ENCODE measurements at regions of chr2 and their contacts with region 1.

Region 1: DNA sequence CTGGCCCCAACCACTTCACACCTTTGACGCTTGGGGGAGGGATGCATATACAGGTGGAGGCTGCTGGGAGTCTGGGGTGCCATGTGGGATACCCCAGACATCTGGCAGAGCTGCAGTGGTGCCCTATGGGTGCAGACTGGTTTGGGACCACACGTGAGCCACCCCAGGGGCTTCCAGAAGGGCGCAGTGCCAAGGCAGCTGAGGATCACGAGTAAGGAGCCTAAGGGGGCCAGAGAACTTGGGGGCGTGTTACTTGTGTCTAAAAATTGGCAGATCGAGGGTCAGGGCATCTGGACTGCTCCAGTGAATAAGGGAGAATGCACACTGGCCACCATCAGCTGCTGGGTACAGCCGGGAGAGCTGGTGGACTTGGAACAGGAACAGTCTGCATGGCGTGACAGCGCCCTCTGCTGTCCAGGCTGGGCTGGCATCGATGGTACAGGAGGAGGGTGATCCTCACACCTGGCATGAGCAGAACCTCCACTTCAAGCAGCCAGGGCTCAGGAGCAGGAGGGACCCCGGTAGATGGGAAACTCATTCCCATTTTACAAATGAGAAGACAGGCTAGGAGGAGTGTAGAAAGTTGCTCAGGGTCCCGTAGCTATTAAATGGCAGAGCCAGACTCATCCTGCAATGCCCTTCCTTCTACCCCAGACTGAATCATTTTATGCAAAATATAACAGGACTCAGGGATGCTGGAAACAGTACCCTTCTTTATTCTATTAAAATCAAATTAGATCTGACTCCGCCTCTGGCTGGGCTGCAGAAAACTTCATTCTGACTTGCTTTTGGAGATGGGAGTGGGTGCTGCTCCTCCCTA is 60.4 kb downstream of the ATOH8 start:
- DNase-seq: peak; percentile 42 to 85 (median 71)
- ATAC-seq: peak; percentile 93
- H3K4me3 ChIP-seq: no peak overlapping the region
- H3K4me3 Mint-ChIP-seq: no peak overlapping the region
- H3K27ac ChIP-seq: no peak overlapping the region
- H3K27ac Mint-ChIP-seq: no peak overlapping the region
- H3K4me1 ChIP-seq: no peaks in the 10 kb centered on the region
- H3K4me1 Mint-ChIP-seq: peaks cover 0 to 3% (median 0%) of the 10 kb centered on the region in 7 donors
- H3K27me3 ChIP-seq: no peaks in the 10 kb centered on the region
- H3K27me3 Mint-ChIP-seq: peaks cover 0 to 29% (median 7%) of the 10 kb centered on the region in 5 donors

Region 2: GRCh38 chr2:85266146-85267041 is 547.8 kb before region 1 on chr2:
- CTCF ChIA-PET with region 1: no interaction called
- POLR2A ChIA-PET with region 1: no interaction called
- intact Hi-C with region 1: no loop called
- DNase-seq: peak; percentile 27 to 76 (median 48)
- ATAC-seq: peak; percentile 78
- H3K4me3 ChIP-seq: no peak overlapping the region
- H3K4me3 Mint-ChIP-seq: no peak overlapping the region
- H3K27ac ChIP-seq: no peak overlapping the region
- H3K27ac Mint-ChIP-seq: peak overlapping the region in 1 of 9 donors; percentile 21
- H3K4me1 ChIP-seq: no peaks in the 10 kb centered on the region
- H3K4me1 Mint-ChIP-seq: peaks cover 0 to 2% (median 0%) of the 10 kb centered on the region in 7 donors
- H3K27me3 ChIP-seq: no peaks in the 10 kb centered on the region
- H3K27me3 Mint-ChIP-seq: peaks cover 0 to 26% (median 0%) of the 10 kb centered on the region in 5 donors

Region 3: GRCh38 chr2:85642725-85643124 is 171.5 kb before region 1 on chr2:
- CTCF ChIA-PET with region 1: no interaction called
- POLR2A ChIA-PET with region 1: no interaction called
- intact Hi-C with region 1: loop called in 1 of 2 experiments (anchors 1 kb)
- DNase-seq: no peak
- ATAC-seq: no peak
- H3K4me3 ChIP-seq: no peak overlapping the region
- H3K4me3 Mint-ChIP-seq: no peak overlapping the region
- H3K27ac ChIP-seq: no peak overlapping the region
- H3K27ac Mint-ChIP-seq: peak overlapping the region in 2 of 9 donors; percentile 30 to 45
- H3K4me1 ChIP-seq: no peaks in the 10 kb centered on the region
- H3K4me1 Mint-ChIP-seq: peaks cover 0 to 21% (median 0%) of the 10 kb centered on the region in 7 donors
- H3K27me3 ChIP-seq: no peaks in the 10 kb centered on the region
- H3K27me3 Mint-ChIP-seq: no peaks in the 10 kb centered on the region

Region 4: GRCh38 chr2:85648619-85649018 is 165.6 kb before region 1 on chr2:
- CTCF ChIA-PET with region 1: no interaction called
- POLR2A ChIA-PET with region 1: no interaction called
- intact Hi-C with region 1: loop called in 1 of 2 experiments (anchors 1 kb)
- DNase-seq: peak in 2 of 9 donors; percentile 2 to 4
- ATAC-seq: no peak
- H3K4me3 ChIP-seq: no peak overlapping the region
- H3K4me3 Mint-ChIP-seq: no peak overlapping the region
- H3K27ac ChIP-seq: no peak overlapping the region
- H3K27ac Mint-ChIP-seq: peak overlapping the region in 1 of 9 donors; percentile 13
- H3K4me1 ChIP-seq: no peaks in the 10 kb centered on the region
- H3K4me1 Mint-ChIP-seq: no peaks in the 10 kb centered on the region
- H3K27me3 ChIP-seq: no peaks in the 10 kb centered on the region
- H3K27me3 Mint-ChIP-seq: no peaks in the 10 kb centered on the region

Region 5: GRCh38 chr2:85678794-85679672 is 135.2 kb before region 1 on chr2:
- CTCF ChIA-PET with region 1: interaction called, 3 read pairs
- POLR2A ChIA-PET with region 1: no interaction called
- intact Hi-C with region 1: loop called in 1 of 2 experiments (anchors 1 kb)
- DNase-seq: peak; percentile 43 to 86 (median 71)
- ATAC-seq: peak; percentile 97
- H3K4me3 ChIP-seq: no peak overlapping the region
- H3K4me3 Mint-ChIP-seq: peak overlapping the region in 7 of 10 donors; percentile 13 to 62 (median 52)
- H3K27ac ChIP-seq: no peak overlapping the region
- H3K27ac Mint-ChIP-seq: peak overlapping the region in 1 of 9 donors; percentile 57
- H3K4me1 ChIP-seq: peaks cover 0 to 7% of the 10 kb centered on the region in 2 donors
- H3K4me1 Mint-ChIP-seq: peaks cover 0 to 30% (median 0%) of the 10 kb centered on the region in 7 donors
- H3K27me3 ChIP-seq: no peaks in the 10 kb centered on the region
- H3K27me3 Mint-ChIP-seq: peaks cover 0 to 7% (median 3%) of the 10 kb centered on the region in 5 donors

Region 6: GRCh38 chr2:85728883-85729824 is 85.0 kb before region 1 on chr2:
- CTCF ChIA-PET with region 1: interaction called, 14 read pairs
- POLR2A ChIA-PET with region 1: no interaction called
- intact Hi-C with region 1: loop called (anchors 1 kb)
- DNase-seq: peak; percentile 16 to 84 (median 58)
- ATAC-seq: peak; percentile 88
- H3K4me3 ChIP-seq: no peak overlapping the region
- H3K4me3 Mint-ChIP-seq: no peak overlapping the region
- H3K27ac ChIP-seq: no peak overlapping the region
- H3K27ac Mint-ChIP-seq: peak overlapping the region in 1 of 9 donors; percentile 12
- H3K4me1 ChIP-seq: peaks cover 0 to 8% of the 10 kb centered on the region in 2 donors
- H3K4me1 Mint-ChIP-seq: peaks cover 0 to 9% (median 0%) of the 10 kb centered on the region in 7 donors
- H3K27me3 ChIP-seq: no peaks in the 10 kb centered on the region
- H3K27me3 Mint-ChIP-seq: peaks cover 0 to 30% (median 8%) of the 10 kb centered on the region in 5 donors

Region 7: DNA sequence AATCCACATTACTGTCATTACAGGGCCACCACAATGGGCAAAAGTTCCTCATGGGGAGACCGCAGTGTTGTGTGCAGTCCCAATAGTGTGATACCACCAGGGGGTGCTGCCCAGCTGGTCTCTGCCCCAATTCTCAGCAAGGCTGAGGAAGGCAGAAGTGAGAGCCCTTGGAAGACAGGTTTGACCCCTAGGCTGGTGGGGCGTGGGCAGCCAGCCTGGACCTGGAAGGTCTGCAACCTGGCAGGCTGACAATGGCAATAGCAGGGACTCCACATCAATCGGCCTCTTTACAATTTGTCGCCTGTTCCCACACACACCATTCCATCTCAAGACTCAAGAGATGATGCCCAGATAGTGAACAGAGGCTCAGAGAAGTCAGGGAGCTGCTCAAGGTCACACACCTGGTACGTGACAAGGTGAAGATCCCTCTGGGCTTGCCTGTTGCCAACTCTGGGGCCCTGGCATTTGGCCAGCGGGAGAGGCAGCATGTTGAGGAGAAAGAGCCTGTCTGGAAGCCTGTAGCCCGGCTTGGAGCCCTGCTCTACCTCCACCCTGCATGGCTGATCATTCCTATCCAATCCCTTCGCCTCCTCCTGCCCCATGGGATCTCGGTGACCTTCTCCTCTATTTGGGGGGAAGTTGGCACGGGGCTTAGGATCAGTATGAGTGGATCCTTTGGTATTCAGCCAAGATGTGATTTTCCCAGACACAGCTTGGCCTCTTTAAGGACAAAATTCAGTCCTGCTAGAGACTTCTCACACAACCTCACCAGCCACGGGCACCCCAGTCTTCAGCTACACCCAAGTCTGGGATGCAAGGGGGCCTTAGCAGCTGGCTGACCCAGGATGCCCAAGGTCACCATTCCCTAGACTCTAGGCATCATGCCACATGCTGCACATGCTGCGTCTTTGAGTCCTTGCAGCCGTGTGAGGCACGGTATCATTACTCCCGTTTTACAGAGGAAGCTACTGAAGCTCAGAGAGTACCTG is 63.3 kb before region 1 on chr2:
- CTCF ChIA-PET with region 1: interaction called, 5 read pairs
- POLR2A ChIA-PET with region 1: no interaction called
- intact Hi-C with region 1: loop called (anchors 1 kb)
- DNase-seq: peak in 7 of 9 donors; percentile 36 to 62 (median 42)
- ATAC-seq: peak; percentile 79
- H3K4me3 ChIP-seq: no peak overlapping the region
- H3K4me3 Mint-ChIP-seq: peak overlapping the region in 1 of 10 donors; percentile 44
- H3K27ac ChIP-seq: no peak overlapping the region
- H3K27ac Mint-ChIP-seq: no peak overlapping the region
- H3K4me1 ChIP-seq: peaks cover 9 to 13% of the 10 kb centered on the region in 2 donors
- H3K4me1 Mint-ChIP-seq: peaks cover 5 to 20% (median 17%) of the 10 kb centered on the region in 7 donors
- H3K27me3 ChIP-seq: peaks cover 6 to 13% of the 10 kb centered on the region in 2 donors
- H3K27me3 Mint-ChIP-seq: peaks cover 47 to 89% (median 49%) of the 10 kb centered on the region in 5 donors

Measured in naive thymus-derived CD4-positive, alpha-beta T cell (primary cell).